Activated CD4-positive, alpha-beta T cell treated with anti-CD3 and anti-CD28 coated beads, Interleukin-2, amount 10 ng/mL, durations not matched to agents 7 days and 5 days (primary cell): ENCODE measurements at regions of chr7 and their contacts with region 1.

Region 1: DNA sequence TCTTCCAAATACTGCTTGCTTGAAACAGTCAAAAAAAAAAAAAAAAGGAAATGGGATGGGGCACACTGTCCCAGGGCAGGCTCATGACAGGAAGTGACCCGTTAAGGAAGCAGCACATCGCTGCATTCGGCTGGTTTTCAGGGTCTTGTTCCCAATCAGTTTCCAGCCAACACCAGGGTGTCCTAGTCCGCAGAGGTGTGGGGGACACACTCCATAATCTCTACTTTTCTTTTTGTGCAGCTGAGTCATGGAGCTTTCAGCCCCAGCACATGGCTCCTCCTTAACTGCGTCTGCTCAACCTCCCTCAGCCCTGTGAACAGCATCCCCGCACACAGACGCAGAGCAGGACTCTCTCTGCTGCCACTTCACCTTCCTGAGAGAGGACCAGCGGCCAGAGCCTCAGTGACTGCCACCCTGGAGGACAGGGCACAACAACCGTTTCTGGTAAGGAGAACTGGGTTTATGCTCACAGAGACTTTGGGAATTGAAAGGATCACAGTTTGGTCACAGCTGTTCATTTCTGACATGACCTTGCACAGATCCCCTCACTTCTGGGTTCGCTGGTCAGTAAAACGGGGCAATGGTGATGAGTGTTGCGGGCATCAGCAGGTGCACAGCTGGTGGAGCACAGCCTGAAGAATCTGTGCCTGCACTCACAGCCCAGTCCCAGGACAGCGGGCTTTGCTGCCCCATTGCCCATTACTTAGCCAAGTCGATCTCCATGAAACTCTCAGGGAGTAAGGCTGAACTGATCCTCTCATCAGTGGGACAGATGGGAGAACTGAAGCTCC is at the start of gene GIMAP5:
- DNase-seq: peak; percentile 64
- H3K4me3 Mint-ChIP-seq: peak within 1 kb of the TSS; percentile 85
- H3K27ac Mint-ChIP-seq: peak within 1 kb of the TSS; percentile 88
- H3K4me1 Mint-ChIP-seq: peaks cover 74% of the 10 kb centered on the region
- H3K27me3 Mint-ChIP-seq: no peaks in the 10 kb centered on the region
- total RNA-seq, gene GIMAP5: 111 to 149 TPM

Region 2: GRCh38 chr7:150722431-150722931 is 15.0 kb before region 1 on chr7:
- CTCF ChIA-PET with region 1: interaction called, 13 read pairs
- POLR2A ChIA-PET with region 1: interaction called, 3 read pairs
- DNase-seq: no peak
- H3K4me3 Mint-ChIP-seq: no peak overlapping the region
- H3K27ac Mint-ChIP-seq: no peak overlapping the region
- H3K4me1 Mint-ChIP-seq: peaks cover 67% of the 10 kb centered on the region
- H3K27me3 Mint-ChIP-seq: no peaks in the 10 kb centered on the region

Region 3: GRCh38 chr7:150753826-150754603 is 16.6 kb after region 1 on chr7:
- CTCF ChIA-PET with region 1: interaction called, 7 read pairs
- POLR2A ChIA-PET with region 1: interaction called, 11 read pairs
- DNase-seq: peak; percentile 40
- H3K4me3 Mint-ChIP-seq: peak overlapping the region; percentile 27
- H3K27ac Mint-ChIP-seq: peak overlapping the region; percentile 93
- H3K4me1 Mint-ChIP-seq: peaks cover 72% of the 10 kb centered on the region
- H3K27me3 Mint-ChIP-seq: peaks cover 2% of the 10 kb centered on the region